Caco-2 (cell line): ENCODE measurements at regions of chr12 and their contacts with region 1.

Region 1: GRCh38 chr12:125533434-125534029 is 468.3 kb downstream of the AACS start:
- DNase-seq: peak; percentile 42 to 74
- H3K4me3 ChIP-seq: no peak overlapping the region
- H3K4me3 Mint-ChIP-seq: no peak overlapping the region
- H3K27ac Mint-ChIP-seq: no peak overlapping the region
- H3K4me1 ChIP-seq: no peaks in the 10 kb centered on the region; the same call in 1 of the 2 replicates
- H3K4me1 Mint-ChIP-seq: no peaks in the 10 kb centered on the region
- H3K27me3 ChIP-seq: no peaks in the 10 kb centered on the region
- H3K27me3 Mint-ChIP-seq: peaks cover 7% of the 10 kb centered on the region
- CTCF ChIP-seq: peak; percentile 85 to 89

Region 2: DNA sequence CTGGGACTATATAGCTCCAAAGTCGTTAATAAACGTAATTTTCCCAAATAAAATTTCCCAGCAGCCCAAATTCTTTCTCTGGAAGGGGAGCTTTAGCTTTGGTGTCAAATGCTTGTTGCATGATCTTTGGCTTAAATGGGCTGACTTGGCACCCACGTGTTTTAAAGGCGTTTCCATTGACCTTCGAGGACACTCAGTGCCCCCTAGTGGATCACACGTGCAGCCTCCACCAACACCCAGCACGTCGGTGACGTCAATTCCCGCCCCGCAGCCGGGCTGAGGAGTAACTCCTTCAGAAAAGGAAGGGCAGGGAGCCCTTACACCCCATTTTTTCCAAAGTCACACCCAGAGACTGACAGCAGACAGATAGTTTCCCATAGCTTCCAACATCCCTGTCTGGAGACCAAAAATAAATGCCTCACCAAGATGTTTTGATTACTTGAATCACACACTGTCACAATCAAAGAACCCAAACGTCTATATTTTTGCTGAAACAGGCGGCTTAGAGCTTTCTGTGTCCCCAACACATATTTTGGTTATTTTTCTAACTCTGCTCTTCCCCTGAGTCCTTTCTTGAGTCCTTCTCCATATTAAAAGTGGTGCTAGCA is 239.6 kb after region 1 on chr12:
- CTCF ChIA-PET with region 1: no interaction called
- POLR2A ChIA-PET with region 1: no interaction called
- intact Hi-C with region 1: loop called (anchors 2 kb)
- DNase-seq: peak; percentile 56 to 60
- H3K4me3 ChIP-seq: no peak overlapping the region
- H3K4me3 Mint-ChIP-seq: no peak overlapping the region
- H3K27ac Mint-ChIP-seq: no peak overlapping the region
- H3K4me1 ChIP-seq: no peaks in the 10 kb centered on the region
- H3K4me1 Mint-ChIP-seq: no peaks in the 10 kb centered on the region
- H3K27me3 ChIP-seq: no peaks in the 10 kb centered on the region
- H3K27me3 Mint-ChIP-seq: peaks cover 2% of the 10 kb centered on the region
- CTCF ChIP-seq: peak; percentile 37 to 51

Region 3: DNA sequence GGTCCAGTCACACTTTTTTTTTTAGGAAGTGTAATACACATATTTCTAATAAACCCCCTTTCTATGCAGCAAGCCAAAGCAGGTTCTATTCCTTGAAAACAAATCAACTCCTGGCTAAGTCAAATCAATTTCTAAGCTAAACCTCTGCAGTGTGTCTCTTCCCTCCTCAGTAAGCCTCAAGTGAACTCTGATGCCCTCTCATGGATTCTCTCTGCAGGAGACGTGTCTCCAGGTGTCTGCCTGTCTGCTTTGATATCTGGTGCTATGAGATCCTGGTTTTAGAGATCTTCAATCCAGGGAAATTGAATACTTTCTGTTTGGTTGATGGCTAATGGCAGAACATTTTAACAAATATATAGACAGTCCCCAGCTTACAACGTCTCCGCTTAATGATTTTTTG is 323.4 kb after region 1 on chr12:
- CTCF ChIA-PET with region 1: no interaction called
- POLR2A ChIA-PET with region 1: no interaction called
- intact Hi-C with region 1: loop called (anchors 1 kb)
- DNase-seq: no peak
- H3K4me3 ChIP-seq: no peak overlapping the region
- H3K4me3 Mint-ChIP-seq: no peak overlapping the region
- H3K27ac Mint-ChIP-seq: no peak overlapping the region
- H3K4me1 ChIP-seq: no peaks in the 10 kb centered on the region
- H3K4me1 Mint-ChIP-seq: no peaks in the 10 kb centered on the region
- H3K27me3 ChIP-seq: no peaks in the 10 kb centered on the region
- H3K27me3 Mint-ChIP-seq: no peaks in the 10 kb centered on the region
- CTCF ChIP-seq: no peak

Region 4: GRCh38 chr12:126747530-126748149 is 1214.1 kb after region 1 on chr12:
- CTCF ChIA-PET with region 1: no interaction called
- POLR2A ChIA-PET with region 1: no interaction called
- intact Hi-C with region 1: loop called (anchors 2 kb)
- DNase-seq: peak in 1 of 2 experiments; percentile 49
- H3K4me3 ChIP-seq: no peak overlapping the region
- H3K4me3 Mint-ChIP-seq: no peak overlapping the region
- H3K27ac Mint-ChIP-seq: no peak overlapping the region
- H3K4me1 ChIP-seq: no peaks in the 10 kb centered on the region
- H3K4me1 Mint-ChIP-seq: no peaks in the 10 kb centered on the region
- H3K27me3 ChIP-seq: no peaks in the 10 kb centered on the region
- H3K27me3 Mint-ChIP-seq: no peaks in the 10 kb centered on the region
- CTCF ChIP-seq: peak; percentile 59 to 83

Region 5: DNA sequence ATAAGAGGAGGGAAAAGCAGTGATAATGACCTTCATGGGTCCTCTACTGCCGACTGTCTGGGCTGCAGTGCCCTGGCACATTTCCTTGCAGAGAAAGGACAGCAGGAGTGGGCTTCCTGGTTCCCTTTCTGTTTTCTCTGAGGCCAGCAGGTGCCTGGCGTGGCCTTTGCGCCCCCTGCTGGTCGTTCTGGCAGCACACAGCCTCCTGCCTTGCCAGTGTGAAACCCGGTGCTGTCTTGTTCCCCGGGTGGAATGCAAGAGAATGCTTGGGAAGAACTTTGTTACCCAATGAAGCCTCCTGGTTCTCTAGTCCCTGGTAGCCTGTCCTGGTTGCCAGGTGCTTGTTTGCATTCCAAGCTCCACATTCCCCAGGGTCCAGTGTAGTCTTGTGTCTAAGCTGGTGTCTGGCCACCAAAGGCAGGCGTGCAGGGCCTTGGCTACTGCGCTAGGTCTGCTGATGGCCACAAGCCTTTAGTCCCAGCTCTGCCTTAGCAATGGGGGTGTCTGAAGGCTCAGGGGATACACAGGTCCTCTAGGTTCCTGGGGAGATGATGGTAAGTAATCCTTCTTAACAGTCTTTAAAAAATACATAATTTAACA is 1341.0 kb after region 1 on chr12:
- CTCF ChIA-PET with region 1: no interaction called
- POLR2A ChIA-PET with region 1: no interaction called
- intact Hi-C with region 1: loop called (anchors 2 kb)
- DNase-seq: peak; percentile 50 to 63
- H3K4me3 ChIP-seq: no peak overlapping the region
- H3K4me3 Mint-ChIP-seq: no peak overlapping the region
- H3K27ac Mint-ChIP-seq: no peak overlapping the region
- H3K4me1 ChIP-seq: no peaks in the 10 kb centered on the region
- H3K4me1 Mint-ChIP-seq: no peaks in the 10 kb centered on the region
- H3K27me3 ChIP-seq: no peaks in the 10 kb centered on the region
- H3K27me3 Mint-ChIP-seq: no peaks in the 10 kb centered on the region
- CTCF ChIP-seq: peak; percentile 61 to 80